Naive thymus-derived CD4-positive, alpha-beta T cell (primary cell): ENCODE measurements at regions of chr2 and their contacts with region 1.

Region 1: DNA sequence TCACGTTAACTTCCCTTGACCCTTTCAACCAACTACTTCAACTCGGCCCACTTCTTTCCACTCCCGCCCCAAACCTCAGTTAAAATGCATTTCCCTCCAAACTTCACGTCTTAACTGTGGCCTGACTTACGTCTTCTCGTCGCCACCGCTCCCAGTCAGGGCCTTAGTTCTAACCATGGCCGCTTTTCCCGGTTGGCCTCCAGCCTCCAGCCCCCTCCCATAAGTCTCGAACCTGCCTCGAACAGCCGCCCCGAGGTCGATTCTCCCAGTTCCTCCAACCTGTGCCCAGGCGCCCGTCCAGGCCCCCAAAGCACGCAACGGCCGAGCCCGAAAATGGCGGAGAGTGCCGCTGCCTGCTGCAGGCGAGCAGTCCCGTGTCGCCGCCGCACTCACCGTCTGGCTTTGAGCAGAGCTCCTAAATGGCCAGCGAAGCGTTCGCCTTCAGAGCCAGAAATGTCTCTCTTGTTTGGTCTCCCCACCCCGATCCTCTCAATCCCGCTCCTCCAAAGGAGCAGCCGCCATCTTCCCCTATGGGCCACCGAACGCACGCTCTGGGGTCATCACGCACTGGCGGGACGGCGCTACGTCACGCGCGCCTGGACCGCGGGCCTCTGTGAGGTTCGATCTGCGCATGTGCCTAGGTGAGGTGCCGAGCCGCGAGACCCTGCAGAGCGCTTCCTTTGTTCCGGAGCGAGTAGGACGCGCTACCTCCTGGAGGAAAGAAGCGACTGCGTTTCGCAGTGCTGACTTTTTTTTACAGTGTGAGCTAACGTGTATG is at the start of gene WDR33:
- DNase-seq: peak; percentile 84 to 94 (median 93)
- ATAC-seq: peak; percentile 97
- H3K4me3 ChIP-seq: peak within 1 kb of the TSS; percentile 79
- H3K4me3 Mint-ChIP-seq: peak within 1 kb of the TSS; percentile 91 to 100 (median 96)
- H3K27ac ChIP-seq: peak within 1 kb of the TSS; percentile 98
- H3K27ac Mint-ChIP-seq: peak within 1 kb of the TSS; percentile 94 to 100 (median 99)
- H3K4me1 ChIP-seq: peaks cover 17 to 24% of the 10 kb centered on the region in 2 donors
- H3K4me1 Mint-ChIP-seq: peaks cover 33 to 62% (median 51%) of the 10 kb centered on the region in 7 donors
- H3K27me3 ChIP-seq: no peaks in the 10 kb centered on the region
- H3K27me3 Mint-ChIP-seq: peaks cover 0 to 12% (median 0%) of the 10 kb centered on the region in 5 donors
- total RNA-seq, gene WDR33: 62.6 to 98.7 (median 72.3) TPM

Region 2: DNA sequence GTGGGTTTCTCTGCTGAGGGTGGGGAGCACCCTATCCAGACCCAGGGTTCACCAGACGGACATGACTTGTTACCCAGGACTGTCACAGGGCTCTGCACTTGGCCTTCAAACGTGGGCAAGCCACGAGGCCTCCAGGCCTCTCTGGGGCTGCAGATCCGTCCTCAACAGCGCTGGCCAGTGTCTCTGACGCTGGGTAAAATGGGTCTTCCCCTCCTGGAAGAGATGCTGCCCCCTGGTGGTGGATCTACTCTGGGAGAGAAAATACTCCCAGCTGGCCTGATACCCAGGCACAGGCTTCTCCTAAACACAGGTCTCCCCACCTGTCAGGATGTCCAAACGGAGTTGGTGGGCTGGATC is 161.1 kb before region 1 on chr2:
- CTCF ChIA-PET with region 1: no interaction called
- POLR2A ChIA-PET with region 1: no interaction called
- intact Hi-C with region 1: loop called in 1 of 2 experiments (anchors 2 kb)
- DNase-seq: peak; percentile 60 to 91 (median 79)
- ATAC-seq: peak; percentile 88
- H3K4me3 ChIP-seq: peak overlapping the region; percentile 15
- H3K4me3 Mint-ChIP-seq: peak overlapping the region in 8 of 10 donors; percentile 47 to 78 (median 72)
- H3K27ac ChIP-seq: peak overlapping the region; percentile 18
- H3K27ac Mint-ChIP-seq: peak overlapping the region in 7 of 9 donors; percentile 79 to 92 (median 88)
- H3K4me1 ChIP-seq: peaks cover 0 to 9% of the 10 kb centered on the region in 2 donors
- H3K4me1 Mint-ChIP-seq: peaks cover 10 to 38% (median 29%) of the 10 kb centered on the region in 7 donors
- H3K27me3 ChIP-seq: no peaks in the 10 kb centered on the region
- H3K27me3 Mint-ChIP-seq: no peaks in the 10 kb centered on the region

Region 3: DNA sequence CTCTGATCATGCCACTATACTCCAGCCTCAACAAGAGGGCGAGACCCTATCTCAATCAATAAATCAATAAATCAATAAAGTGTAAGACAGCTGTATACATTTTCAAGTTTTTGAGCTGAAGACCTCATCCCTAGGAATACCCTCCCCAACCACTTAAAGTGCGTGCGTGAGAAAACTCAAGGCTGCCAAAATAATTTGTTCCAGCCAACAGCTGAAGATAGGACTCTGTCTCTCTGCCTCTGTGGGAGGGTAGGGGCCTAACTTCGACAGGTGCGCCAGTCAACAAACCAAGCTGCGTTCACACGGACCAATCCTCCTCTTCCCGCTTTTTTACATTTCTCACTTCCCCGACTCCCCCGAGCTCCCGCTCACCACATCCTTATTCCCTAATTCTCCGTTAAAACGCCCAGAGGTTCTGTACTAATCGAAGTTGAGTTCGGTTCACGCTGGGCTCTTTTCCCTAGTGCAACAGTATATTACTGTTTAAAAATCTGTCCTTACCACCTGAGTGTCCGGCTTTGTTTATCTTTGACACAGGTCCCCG is 46.5 kb after region 1 on chr2:
- CTCF ChIA-PET with region 1: no interaction called
- POLR2A ChIA-PET with region 1: interaction called, 10 read pairs
- intact Hi-C with region 1: loop called (anchors 1 kb)
- DNase-seq: no peak
- ATAC-seq: no peak
- H3K4me3 ChIP-seq: peak overlapping the region; percentile 98
- H3K4me3 Mint-ChIP-seq: peak overlapping the region; percentile 84 to 99 (median 94)
- H3K27ac ChIP-seq: peak overlapping the region; percentile 86
- H3K27ac Mint-ChIP-seq: peak overlapping the region; percentile 29 to 97 (median 90)
- H3K4me1 ChIP-seq: peaks cover 22 to 25% of the 10 kb centered on the region in 2 donors
- H3K4me1 Mint-ChIP-seq: peaks cover 22 to 68% (median 44%) of the 10 kb centered on the region in 7 donors
- H3K27me3 ChIP-seq: no peaks in the 10 kb centered on the region
- H3K27me3 Mint-ChIP-seq: no peaks in the 10 kb centered on the region

Region 4: DNA sequence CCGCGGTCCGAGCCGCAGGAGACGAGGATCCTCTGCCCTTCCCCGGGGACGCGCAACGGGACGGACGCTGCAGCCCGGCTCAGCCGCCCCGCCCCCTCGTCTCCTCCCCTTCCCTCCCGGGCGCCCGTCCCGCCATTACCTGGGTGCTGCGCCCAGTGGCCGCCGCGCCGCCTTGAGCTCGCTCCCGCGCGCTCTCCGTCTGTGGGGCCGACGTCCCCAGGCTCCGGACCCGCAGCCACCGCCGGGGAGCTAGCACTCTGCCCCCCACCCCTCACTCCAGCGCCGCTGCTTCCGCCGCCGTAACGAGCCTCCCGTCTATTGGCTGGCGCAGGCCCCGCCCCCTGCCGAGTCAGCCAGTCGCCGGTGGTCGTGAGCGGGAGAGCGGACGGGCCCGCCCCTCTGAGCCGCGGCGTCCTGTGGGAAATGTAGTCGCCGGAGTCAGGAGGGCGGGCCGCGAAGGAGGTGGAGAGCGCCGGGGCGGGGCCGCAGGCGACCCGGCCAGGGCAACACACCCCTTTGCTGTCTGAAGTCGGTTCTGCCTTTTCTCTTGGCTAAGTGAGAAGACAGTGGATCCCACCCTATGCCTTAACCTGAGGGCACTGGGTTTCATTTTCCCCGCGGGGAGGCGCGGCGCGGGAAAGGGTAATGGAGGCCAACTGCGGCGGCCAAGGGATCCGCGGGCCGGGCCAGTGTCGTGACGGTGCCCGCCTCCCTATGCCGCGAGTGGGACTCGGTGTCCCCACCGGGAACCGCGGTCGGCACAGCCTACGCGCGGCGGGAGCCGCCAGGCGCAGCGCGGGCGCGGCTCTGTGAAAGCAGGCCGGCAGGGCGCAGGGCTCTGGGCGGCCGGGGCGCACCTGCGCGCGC is 217.2 kb after region 1 on chr2 and contains the start of gene SAP130:
- CTCF ChIA-PET with region 1: no interaction called
- POLR2A ChIA-PET with region 1: no interaction called
- intact Hi-C with region 1: loop called (anchors 1 kb)
- DNase-seq: peak; percentile 96 to 99 (median 98)
- ATAC-seq: peak; percentile 86
- H3K4me3 ChIP-seq: peak within 1 kb of the TSS; percentile 86
- H3K4me3 Mint-ChIP-seq: peak within 1 kb of the TSS; percentile 87 to 98 (median 98)
- H3K27ac ChIP-seq: peak within 1 kb of the TSS; percentile 91
- H3K27ac Mint-ChIP-seq: peak within 1 kb of the TSS; percentile 52 to 97 (median 93)
- H3K4me1 ChIP-seq: peaks cover 0 to 14% of the 10 kb centered on the region in 2 donors
- H3K4me1 Mint-ChIP-seq: peaks cover 14 to 32% (median 28%) of the 10 kb centered on the region in 7 donors
- H3K27me3 ChIP-seq: no peaks in the 10 kb centered on the region
- H3K27me3 Mint-ChIP-seq: peaks cover 0 to 16% (median 0%) of the 10 kb centered on the region in 5 donors
- total RNA-seq, gene SAP130: 29.9 to 38.0 (median 30.9) TPM